CD4-positive, alpha-beta memory T cell (primary cell): ENCODE measurements at regions of chr18 and their contacts with region 1.

Region 1: DNA sequence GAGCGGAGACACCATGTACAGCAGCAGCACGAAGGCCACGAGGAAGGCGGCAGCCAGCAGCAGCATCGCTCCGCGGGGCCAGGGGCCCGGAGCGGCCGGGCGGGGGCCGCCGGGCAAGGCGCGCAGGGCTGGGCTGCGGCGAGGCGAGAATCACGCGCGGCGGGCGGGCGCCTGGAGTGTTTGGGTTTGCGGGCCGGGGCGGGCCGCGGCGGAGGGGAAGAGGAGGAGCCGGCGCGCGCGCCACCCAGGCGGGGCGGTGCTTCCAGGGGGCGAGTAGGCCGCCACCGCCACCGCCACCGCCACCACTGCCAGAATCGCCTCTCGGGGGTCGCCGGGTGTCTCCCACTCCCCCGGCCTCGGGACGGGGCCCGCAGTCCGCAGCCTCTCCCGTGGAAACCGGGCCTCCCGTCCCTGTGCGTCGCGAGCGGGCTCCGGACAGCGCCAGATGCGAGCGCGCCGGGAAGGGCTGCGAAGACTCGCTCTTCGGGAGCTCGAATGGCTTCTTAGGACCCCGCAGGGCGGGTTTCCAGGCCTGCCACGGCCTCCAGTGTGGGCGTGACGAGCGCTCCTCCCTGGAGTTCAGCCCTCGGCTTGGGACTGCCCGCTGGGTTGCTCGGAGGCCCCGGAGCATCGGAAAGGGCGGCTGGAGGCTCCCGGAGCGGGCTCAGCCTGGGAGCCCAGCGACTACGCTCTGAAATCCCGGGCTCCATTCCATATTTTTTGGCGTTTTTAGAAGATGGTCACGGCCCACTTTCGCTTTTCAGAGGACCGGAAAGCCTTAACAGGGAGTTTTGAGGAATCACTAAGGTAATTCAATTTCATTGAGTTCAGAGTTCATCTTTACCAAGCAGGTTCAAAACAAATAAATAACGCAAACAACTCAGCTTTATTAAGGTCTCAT is at the start of gene KDSR:
- DNase-seq: peak; percentile 81 to 84 (median 81)
- H3K4me3 ChIP-seq: peak within 1 kb of the TSS; percentile 90 to 98
- H3K4me3 Mint-ChIP-seq: peak within 1 kb of the TSS; percentile 91 to 98 (median 97)
- H3K27ac ChIP-seq: peak within 1 kb of the TSS; percentile 71
- H3K27ac Mint-ChIP-seq: peak within 1 kb of the TSS; percentile 88 to 95 (median 94)
- H3K4me1 ChIP-seq: peaks cover 39% of the 10 kb centered on the region
- H3K4me1 Mint-ChIP-seq: peaks cover 27 to 55% (median 39%) of the 10 kb centered on the region in 4 donors
- H3K27me3 ChIP-seq: no peaks in the 10 kb centered on the region
- H3K27me3 Mint-ChIP-seq: no peaks in the 10 kb centered on the region
- total RNA-seq, gene KDSR: 59.4 to 61.7 TPM

Region 2: DNA sequence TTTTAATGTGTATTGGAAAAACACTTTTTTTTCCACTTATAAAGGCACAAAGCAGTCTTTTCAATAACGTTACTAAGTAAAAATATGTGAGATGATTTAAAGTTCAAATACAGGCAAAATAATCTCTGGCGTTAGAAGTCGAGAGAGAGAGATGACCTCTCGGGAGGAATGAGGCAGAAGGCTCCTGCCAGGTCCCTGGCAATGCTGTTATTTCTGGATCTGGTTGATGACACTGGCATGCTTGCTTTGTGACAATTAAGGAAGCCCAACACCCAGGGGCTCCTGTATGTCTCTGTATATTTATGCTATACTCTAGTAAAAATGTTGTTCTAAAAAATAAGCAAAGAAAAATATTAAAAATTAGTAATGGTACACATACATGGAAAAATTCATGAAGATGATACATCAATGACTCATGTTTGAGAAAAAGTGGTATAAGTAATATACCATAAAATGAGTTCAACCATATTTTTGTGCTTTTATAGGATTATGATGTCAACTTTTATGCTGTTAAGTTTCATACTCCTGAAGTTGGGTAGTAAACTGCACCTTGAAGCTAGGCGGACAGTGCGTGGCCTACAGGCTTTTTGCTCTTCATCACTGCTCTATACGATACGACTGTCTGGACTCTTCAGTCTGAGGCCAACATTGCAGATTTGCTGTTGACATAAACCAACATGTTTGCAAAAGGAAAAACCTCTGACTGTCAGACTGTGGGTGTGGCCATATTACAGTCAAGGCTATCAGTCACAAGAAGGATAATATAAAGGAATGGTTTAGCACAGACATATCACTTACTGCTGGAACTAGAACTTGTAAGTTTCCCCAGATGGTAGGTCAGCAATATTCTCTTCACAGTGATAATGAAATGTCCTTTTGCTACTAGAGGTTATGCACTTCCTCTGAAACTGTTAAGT is 35.2 kb after region 1 on chr18:
- CTCF ChIA-PET with region 1: no interaction called
- POLR2A ChIA-PET with region 1: interaction called, 3 read pairs
- intact Hi-C with region 1: loop called (anchors 5 kb)
- DNase-seq: no peak
- H3K4me3 ChIP-seq: no peak overlapping the region
- H3K4me3 Mint-ChIP-seq: no peak overlapping the region
- H3K27ac ChIP-seq: no peak overlapping the region
- H3K27ac Mint-ChIP-seq: peak overlapping the region in 6 of 7 donors; percentile 42 to 83 (median 65)
- H3K4me1 ChIP-seq: peaks cover 18% of the 10 kb centered on the region
- H3K4me1 Mint-ChIP-seq: peaks cover 13 to 17% (median 17%) of the 10 kb centered on the region in 4 donors
- H3K27me3 ChIP-seq: no peaks in the 10 kb centered on the region
- H3K27me3 Mint-ChIP-seq: no peaks in the 10 kb centered on the region

Region 3: DNA sequence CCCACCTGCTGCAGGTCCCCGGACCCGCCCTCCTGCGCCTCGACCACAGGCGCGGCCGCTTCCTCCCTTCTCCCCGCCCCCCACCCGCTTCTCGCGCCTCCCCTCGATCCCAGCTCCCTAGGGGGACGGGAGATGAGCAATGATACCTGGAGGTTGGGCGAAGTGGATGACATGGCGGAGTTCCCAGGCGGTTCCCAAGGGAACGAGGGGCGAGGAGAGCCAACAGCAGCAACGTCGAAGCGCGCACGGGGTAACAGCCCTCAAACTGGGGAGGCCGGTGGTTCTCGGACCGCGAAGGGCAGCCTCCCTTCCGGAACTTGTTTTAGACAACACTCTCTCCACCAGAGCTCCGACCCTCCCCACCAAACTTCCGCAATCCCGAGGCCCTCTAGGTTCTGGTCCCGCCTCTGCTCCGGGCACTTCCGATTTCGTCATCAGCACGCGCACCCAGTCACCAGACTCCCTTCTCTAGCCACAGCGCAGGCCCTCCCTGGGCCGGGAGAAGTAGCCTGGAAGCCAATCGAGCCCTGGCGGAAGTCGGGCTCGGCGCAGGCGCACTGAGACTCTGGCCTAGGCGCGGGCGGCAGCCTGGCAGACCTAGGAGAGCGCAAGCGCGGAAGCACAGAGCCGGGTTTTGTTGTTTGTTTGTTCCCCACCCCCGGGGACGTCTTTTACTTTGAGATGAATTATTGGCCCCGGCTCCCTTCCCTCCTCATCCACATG is 54.9 kb after region 1 on chr18 and contains the start of gene VPS4B:
- CTCF ChIA-PET with region 1: interaction called, 3 read pairs
- POLR2A ChIA-PET with region 1: interaction called, 55 read pairs
- intact Hi-C with region 1: loop called (anchors 1 kb)
- DNase-seq: peak; percentile 99 to 100 (median 100)
- H3K4me3 ChIP-seq: peak within 1 kb of the TSS; percentile 73 to 98
- H3K4me3 Mint-ChIP-seq: peak within 1 kb of the TSS; percentile 94 to 100 (median 96)
- H3K27ac ChIP-seq: peak within 1 kb of the TSS; percentile 98
- H3K27ac Mint-ChIP-seq: peak within 1 kb of the TSS; percentile 94 to 99 (median 97)
- H3K4me1 ChIP-seq: peaks cover 55% of the 10 kb centered on the region
- H3K4me1 Mint-ChIP-seq: peaks cover 19 to 29% (median 21%) of the 10 kb centered on the region in 4 donors
- H3K27me3 ChIP-seq: no peaks in the 10 kb centered on the region
- H3K27me3 Mint-ChIP-seq: peaks cover 3 to 5% of the 10 kb centered on the region in 2 donors
- total RNA-seq, gene VPS4B: 93.0 to 94.9 TPM

Region 4: DNA sequence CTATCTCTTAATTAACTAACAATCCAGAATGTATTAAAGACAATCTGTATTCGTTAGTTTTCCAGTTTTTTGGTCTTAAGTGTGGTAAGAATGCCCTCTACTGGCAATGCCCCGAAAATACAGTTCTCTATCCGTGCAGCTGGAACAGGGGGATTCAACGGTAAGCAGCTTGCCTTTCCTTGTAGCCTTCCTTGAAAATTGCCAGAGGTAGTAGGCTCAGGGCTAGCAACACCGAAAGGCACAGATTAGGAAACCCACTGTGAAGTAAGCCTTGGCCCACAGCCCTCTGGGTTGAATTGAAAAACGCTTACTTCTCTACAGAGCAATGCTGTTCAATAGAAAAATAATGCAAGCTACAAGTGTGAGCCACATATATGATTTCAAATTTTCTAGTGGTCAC is 72.0 kb after region 1 on chr18:
- CTCF ChIA-PET with region 1: interaction called, 34 read pairs
- POLR2A ChIA-PET with region 1: interaction called, 5 read pairs
- intact Hi-C with region 1: no loop called
- DNase-seq: peak in 4 of 5 donors; percentile 54 to 58 (median 56)
- H3K4me3 ChIP-seq: no peak overlapping the region
- H3K4me3 Mint-ChIP-seq: peak overlapping the region in 1 of 8 donors; percentile 32
- H3K27ac ChIP-seq: no peak overlapping the region
- H3K27ac Mint-ChIP-seq: no peak overlapping the region
- H3K4me1 ChIP-seq: no peaks in the 10 kb centered on the region
- H3K4me1 Mint-ChIP-seq: peaks cover 0 to 3% (median 2%) of the 10 kb centered on the region in 4 donors
- H3K27me3 ChIP-seq: peaks cover 3% of the 10 kb centered on the region
- H3K27me3 Mint-ChIP-seq: peaks cover 0 to 9% of the 10 kb centered on the region in 2 donors